ENCODE measurements at regions of chr7 and their contacts with region 1.

Region 1: DNA sequence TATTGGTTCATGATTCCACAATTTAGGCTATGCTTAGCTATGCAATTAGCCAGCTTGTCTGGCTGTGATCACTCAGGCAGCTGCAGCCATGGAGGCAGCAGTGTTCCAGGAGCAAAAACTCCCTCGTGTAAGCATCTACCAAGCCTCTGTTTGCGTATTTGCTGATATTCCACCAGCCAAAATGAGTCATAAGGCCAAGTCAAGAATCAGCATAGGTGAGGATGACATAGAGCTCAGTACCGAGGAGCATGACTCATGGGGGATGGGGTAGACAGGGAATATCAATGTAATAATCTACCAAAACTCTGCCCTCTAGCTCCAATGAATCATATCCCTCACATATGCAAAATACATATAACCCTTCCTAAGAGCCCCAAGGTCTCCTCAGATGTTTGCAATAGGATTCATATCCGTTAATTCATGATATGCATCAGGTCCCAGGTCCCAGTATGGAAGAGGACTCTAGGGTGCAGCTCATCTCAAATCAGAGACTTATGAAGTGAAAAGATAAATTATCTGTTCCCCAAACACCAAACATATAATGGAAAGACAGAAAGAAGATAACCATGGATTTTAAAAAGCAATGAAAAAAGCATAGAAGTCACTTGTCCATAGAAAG is 63.1 kb downstream of the IMMP2L start:
- DNase-seq: no peak
- ATAC-seq: no peak

Region 2: GRCh38 chr7:112610636-112611035 is 1111.5 kb after region 1 on chr7:
- intact Hi-C with region 1: loop called (anchors 5 kb)
- DNase-seq: no peak
- ATAC-seq: no peak